ENCODE measurements at regions of chr12 and their contacts with region 1.

Region 1: GRCh38 chr12:132189378-132190011 is 45.2 kb downstream of the NOC4L start:
- DNase-seq: peak; percentile 95
- H3K4me3 Mint-ChIP-seq: peak overlapping the region; percentile 93
- H3K27ac Mint-ChIP-seq: peak overlapping the region; percentile 87
- H3K4me1 Mint-ChIP-seq: peaks cover 31% of the 10 kb centered on the region
- H3K27me3 Mint-ChIP-seq: peaks cover 5% of the 10 kb centered on the region

Region 2: DNA sequence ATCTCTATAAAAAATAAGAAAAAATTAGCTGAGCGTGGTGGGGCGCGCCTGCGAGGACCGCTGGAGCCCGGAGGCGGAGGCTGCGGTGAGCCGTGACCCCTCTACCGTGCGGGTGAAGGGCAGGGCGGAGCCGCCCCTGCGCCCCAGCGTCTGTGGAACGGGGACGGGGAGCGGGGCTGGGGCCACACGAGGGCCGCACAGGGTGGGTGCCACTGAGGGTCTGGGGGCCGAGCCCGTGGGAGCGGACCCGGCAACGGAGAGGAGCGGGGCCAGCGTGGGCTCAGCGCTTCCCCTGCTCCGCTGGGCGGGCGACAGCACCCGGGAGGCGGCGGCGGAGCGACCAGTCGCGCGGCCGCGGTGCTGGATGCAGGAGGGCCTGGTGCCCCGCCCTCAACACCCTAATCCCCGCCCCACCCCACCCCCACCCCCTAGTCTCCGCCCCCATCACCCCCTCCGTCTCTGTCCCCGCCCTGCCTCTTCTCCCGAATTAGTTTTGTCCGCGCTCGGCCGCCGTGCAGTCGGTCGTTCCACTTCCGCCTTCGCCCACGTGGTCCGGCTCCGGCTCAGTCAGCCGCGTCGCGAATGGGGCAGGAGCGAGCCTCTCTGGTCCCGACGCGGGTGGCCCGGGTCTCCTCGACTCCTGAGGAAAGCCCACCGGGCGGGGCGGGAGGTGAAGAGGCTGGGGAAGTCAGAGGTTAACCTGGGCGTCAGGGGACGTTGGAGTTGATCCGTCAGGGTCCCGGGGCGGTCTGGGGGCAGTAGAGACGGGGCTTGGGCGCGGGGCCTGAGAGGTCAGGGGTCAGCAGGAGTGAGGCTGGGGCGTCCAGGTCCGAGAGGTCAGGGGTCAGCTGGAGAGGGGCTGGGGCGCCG is 260.5 kb before region 1 on chr12 and contains the start of gene PUS1:
- intact Hi-C with region 1: loop called (anchors 10 kb)
- DNase-seq: peak; percentile 93
- H3K4me3 Mint-ChIP-seq: peak within 1 kb of the TSS; percentile 98
- H3K27ac Mint-ChIP-seq: peak within 1 kb of the TSS; percentile 95
- H3K4me1 Mint-ChIP-seq: peaks cover 13% of the 10 kb centered on the region
- H3K27me3 Mint-ChIP-seq: no peaks in the 10 kb centered on the region
- total RNA-seq, gene PUS1: 92.1 and 100.0 TPM in 2 replicates

Region 3: GRCh38 chr12:132162508-132163031 is 26.9 kb before region 1 on chr12:
- intact Hi-C with region 1: loop called (anchors 2 kb)
- DNase-seq: no peak
- H3K4me3 Mint-ChIP-seq: no peak overlapping the region
- H3K27ac Mint-ChIP-seq: peak overlapping the region; percentile 5
- H3K4me1 Mint-ChIP-seq: peaks cover 10% of the 10 kb centered on the region
- H3K27me3 Mint-ChIP-seq: peaks cover 1% of the 10 kb centered on the region

Region 4: GRCh38 chr12:132218915-132219314 is 29.4 kb after region 1 on chr12:
- intact Hi-C with region 1: loop called (anchors 1 kb)
- DNase-seq: peak; percentile 19
- H3K4me3 Mint-ChIP-seq: no peak overlapping the region
- H3K27ac Mint-ChIP-seq: no peak overlapping the region
- H3K4me1 Mint-ChIP-seq: peaks cover 7% of the 10 kb centered on the region
- H3K27me3 Mint-ChIP-seq: peaks cover 9% of the 10 kb centered on the region

Region 5: DNA sequence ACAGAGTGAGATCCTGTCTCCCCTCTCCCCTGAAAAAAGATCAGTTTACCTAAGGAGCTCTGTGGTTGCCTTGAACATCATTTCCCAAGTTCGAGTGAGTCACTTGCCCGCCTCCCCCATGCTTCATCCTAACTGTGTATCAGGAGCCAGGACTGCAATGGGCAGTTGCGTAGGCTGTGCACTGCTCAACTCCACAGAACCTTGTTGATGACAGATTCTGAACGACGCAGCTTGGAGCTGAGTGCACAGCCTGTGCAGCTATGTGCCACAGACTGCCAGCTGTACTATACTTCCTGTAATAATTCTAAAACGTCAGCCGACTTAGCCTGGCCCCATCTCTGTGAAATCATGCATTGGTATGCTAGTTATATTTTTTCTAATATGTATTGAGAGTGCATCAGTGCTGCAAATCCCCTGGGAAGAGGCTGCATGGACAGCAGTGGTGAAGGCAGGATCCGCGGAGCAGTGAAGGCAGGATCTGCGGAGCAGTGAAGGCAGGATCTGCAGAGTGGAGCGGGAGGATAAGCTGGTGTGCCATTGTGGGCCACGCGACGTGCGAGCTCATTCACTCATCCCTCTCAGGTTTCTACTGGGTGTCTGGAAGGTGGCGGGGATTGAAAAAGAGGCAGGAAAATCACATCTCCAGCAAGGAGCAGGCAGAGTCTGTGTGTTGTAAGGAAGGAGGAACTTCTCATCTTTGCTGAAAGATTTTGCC is 59.1 kb after region 1 on chr12:
- intact Hi-C with region 1: no loop called
- DNase-seq: no peak
- H3K4me3 Mint-ChIP-seq: no peak overlapping the region
- H3K27ac Mint-ChIP-seq: no peak overlapping the region
- H3K4me1 Mint-ChIP-seq: no peaks in the 10 kb centered on the region
- H3K27me3 Mint-ChIP-seq: peaks cover 2% of the 10 kb centered on the region

Region 6: GRCh38 chr12:132489602-132490239 is 300.2 kb after region 1 on chr12 and contains the start of gene FBRSL1:
- intact Hi-C with region 1: loop called (anchors 1 kb)
- DNase-seq: peak; percentile 86
- H3K4me3 Mint-ChIP-seq: peak within 1 kb of the TSS; percentile 87
- H3K27ac Mint-ChIP-seq: peak within 1 kb of the TSS; percentile 90
- H3K4me1 Mint-ChIP-seq: peaks cover 45% of the 10 kb centered on the region
- H3K27me3 Mint-ChIP-seq: peaks cover 1% of the 10 kb centered on the region
- total RNA-seq, gene FBRSL1: 75.8 and 80.2 TPM in 2 replicates

Measured in activated T-helper 1 cell treated with anti-CD3 and anti-CD28 coated beads, Interleukin-12 subunit alpha, Interleukin-12 subunit beta, Interleukin-2, Interleukin-4 antibody, amounts not matched to agents 30 ng/mL and 10 ng/mL and 1 ng/mL, durations not matched to agents 14 hours and 24 hours and 36 hours (primary cell).